ENCODE measurements at regions of chr1 and their contacts with region 1.

Region 1: DNA sequence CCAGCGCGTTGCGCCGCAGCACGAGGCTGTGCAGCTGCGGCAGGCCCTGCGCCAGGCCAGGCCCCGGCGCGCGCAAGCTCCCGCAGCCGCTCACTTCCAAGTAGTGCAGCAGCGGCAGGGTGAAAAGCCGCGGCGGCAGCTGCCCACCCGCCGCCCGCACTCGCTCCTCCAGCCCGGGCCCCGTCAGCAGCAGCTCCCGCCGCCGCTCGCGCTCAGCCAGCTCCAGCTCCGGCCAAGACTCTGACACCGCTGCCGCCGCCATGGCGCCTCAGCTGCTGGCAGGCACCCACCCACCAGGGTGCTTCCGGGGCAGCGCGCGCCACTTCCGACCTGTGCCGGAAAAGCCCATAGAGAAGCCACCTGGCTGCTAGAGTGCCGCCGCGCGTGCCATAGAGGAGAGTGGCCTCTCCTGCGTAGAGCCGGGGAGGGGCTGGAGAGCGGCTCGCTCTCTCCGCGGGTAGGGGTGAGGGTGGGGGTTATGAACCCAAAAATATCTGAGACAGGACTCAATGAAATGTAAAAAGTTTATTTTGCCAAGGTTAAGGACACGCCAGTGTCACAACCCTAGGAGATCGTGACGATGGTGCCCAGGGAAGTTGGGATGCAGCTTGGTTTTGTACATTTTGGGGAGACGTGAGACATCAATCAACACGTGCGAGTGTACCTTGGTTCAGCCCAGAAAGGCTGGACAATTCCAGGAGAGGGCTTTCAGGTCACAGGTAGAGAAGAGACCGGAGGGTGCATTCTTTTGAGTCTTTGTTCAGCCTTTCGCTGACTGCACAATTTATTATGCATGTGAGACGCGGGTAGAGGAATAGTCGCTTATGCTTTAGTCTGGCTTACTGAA is at the start of gene LRRC47:
- DNase-seq: peak; percentile 99
- ATAC-seq: peak; percentile 100
- total RNA-seq, gene LRRC47: 54.5 TPM

Region 2: GRCh38 chr1:3624200-3625136 is 172.0 kb before region 1 on chr1 and contains the start of gene TPRG1L:
- intact Hi-C with region 1: loop called (anchors 10 kb)
- DNase-seq: peak; percentile 99
- ATAC-seq: peak; percentile 98
- total RNA-seq, gene TPRG1L: 46.1 TPM

Region 3: GRCh38 chr1:3746830-3747521 is 49.5 kb before region 1 on chr1:
- intact Hi-C with region 1: loop called (anchors 5 kb)
- DNase-seq: peak; percentile 95
- ATAC-seq: peak; percentile 97

Region 4: GRCh38 chr1:3869751-3870301 is 73.4 kb after region 1 on chr1:
- intact Hi-C with region 1: no loop called
- DNase-seq: no peak
- ATAC-seq: no peak

Region 5: DNA sequence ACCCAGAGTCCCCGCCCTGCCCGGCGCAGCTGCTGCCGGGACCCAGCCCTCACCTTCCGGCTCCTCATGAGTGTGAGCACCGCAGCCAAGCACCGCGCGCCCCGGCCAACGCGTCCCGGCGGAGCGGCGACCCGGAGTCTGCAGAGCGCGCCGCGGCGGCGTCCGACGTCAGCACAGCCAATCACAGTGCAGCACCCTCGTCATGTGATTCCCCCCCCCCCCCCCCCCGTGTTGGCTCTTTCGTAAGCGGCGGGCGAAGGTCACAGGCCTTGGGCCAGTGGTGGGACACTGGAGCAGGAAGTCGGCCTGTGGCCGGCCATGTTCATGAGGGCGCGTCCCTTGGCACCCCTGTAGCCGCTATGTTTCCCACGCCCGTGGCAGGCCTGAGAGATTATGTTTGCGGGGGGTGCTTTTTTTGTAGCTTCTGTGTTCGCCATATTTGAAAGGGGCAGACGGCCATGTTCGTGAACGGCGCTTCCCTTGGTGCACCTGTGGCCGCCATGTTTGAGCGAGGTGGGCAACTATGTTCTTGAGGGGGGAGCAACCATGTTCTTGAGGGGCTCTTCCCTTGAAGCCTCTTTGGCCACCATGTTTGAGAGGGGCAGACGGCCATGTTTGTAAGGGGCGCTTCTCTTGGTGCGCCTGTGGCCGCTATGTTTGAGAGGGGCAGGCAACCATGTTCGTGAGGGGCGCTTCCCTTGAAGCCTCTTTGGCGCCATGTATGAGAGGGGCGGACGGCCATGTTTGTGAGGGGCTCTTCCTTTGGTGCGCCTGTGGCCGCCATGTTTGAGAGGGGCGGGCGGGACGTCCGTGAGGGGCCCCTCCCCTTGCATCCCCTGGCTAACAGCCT is 103.9 kb after region 1 on chr1 and contains the start of gene C1orf174:
- intact Hi-C with region 1: loop called (anchors 2 kb)
- DNase-seq: peak; percentile 97
- ATAC-seq: peak; percentile 92
- total RNA-seq, gene C1orf174: 14.1 TPM